ENCODE measurements at regions of chr20 and their contacts with region 1.

Region 1: DNA sequence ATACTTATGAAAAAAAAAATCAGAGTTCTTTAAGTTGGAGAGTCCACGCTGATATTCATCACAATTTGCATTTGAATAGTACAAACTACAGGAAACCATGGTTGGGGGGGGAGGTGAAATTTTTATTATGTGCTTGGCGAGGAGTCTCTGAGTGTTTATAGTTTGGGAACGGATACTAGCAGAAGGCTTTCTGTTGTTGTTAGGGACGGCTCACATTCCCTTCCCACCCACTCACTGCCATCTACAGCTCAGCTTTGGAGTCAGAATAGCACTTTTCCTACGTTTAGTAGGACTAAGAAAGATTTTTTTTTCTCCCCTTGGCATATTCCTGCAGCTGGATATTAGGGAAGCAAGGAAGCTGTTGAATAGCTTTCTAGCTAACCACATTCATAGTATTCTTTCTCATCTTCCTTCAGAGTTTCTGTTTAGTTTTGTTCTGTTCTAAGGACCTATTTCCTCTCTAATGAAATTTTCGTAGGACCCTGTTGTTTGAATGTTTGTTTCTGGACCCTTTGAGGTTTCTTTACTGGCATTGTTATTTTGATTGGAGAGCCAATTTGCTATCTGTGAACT is 235.1 kb upstream of the ZNF217 start:
- DNase-seq: peak; percentile 84
- H3K4me3 Mint-ChIP-seq: peak overlapping the region; percentile 66
- H3K27ac Mint-ChIP-seq: peak overlapping the region; percentile 98
- H3K4me1 Mint-ChIP-seq: peaks cover 37% of the 10 kb centered on the region
- H3K27me3 Mint-ChIP-seq: no peaks in the 10 kb centered on the region
- CTCF ChIP-seq: no peak

Region 2: GRCh38 chr20:53578492-53579222 is 250.1 kb before region 1 on chr20:
- CTCF ChIA-PET with region 1: interaction called, 5 read pairs
- POLR2A ChIA-PET with region 1: interaction called, 34 read pairs
- intact Hi-C with region 1: loop called (anchors 1 kb)
- DNase-seq: peak; percentile 91
- H3K4me3 Mint-ChIP-seq: peak overlapping the region; percentile 54
- H3K27ac Mint-ChIP-seq: peak overlapping the region; percentile 90
- H3K4me1 Mint-ChIP-seq: peaks cover 30% of the 10 kb centered on the region
- H3K27me3 Mint-ChIP-seq: no peaks in the 10 kb centered on the region
- CTCF ChIP-seq: peak; percentile 92

Region 3: DNA sequence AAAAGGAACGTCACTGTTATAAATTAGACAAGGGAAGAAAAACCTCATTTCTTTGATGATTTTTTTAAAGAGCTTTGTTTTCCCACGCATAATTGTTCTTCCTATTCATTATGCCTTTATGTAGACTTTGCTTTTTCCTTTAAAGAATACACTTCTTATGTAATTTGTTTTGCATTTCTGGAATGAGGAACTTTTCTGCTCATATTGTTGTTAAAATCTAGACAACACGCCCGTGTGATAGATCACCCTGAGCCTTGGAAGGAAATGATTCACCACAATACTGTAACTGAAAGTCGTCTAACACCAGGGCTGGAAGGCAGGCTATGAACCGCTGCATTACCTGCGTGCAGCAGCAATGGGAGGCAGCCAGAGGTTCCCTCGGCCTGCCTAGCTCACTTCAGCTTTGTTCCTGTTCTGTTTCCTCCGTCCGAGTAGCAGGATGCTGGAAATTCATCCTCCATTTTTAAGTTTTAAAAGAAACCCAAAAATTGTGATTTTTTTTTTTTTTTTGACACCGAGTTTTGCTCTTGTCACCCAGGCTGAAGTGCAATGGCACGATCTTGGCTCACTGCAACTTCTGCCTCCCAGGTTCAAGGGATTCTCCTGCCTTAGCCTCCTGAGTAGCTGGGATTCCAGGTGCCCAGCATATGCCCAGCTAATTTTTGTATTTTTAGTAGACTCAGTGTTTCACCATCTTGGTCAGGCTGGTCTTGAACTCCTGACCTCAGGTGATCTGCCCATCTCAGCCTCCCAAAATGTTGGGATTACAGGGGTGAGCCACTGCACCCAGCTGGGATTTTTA is 185.5 kb before region 1 on chr20:
- CTCF ChIA-PET with region 1: interaction called, 4 read pairs
- POLR2A ChIA-PET with region 1: interaction called, 12 read pairs
- intact Hi-C with region 1: loop called (anchors 2 kb)
- DNase-seq: peak; percentile 79
- H3K4me3 Mint-ChIP-seq: peak overlapping the region; percentile 51
- H3K27ac Mint-ChIP-seq: peak overlapping the region; percentile 97
- H3K4me1 Mint-ChIP-seq: peaks cover 12% of the 10 kb centered on the region
- H3K27me3 Mint-ChIP-seq: no peaks in the 10 kb centered on the region
- CTCF ChIP-seq: no peak

Region 4: GRCh38 chr20:53750827-53751619 is 77.7 kb before region 1 on chr20:
- CTCF ChIA-PET with region 1: interaction called, 4 read pairs
- POLR2A ChIA-PET with region 1: interaction called, 27 read pairs
- intact Hi-C with region 1: loop called (anchors 1 kb)
- DNase-seq: no peak
- H3K4me3 Mint-ChIP-seq: no peak overlapping the region
- H3K27ac Mint-ChIP-seq: peak overlapping the region; percentile 83
- H3K4me1 Mint-ChIP-seq: peaks cover 29% of the 10 kb centered on the region
- H3K27me3 Mint-ChIP-seq: no peaks in the 10 kb centered on the region
- CTCF ChIP-seq: no peak

Region 5: DNA sequence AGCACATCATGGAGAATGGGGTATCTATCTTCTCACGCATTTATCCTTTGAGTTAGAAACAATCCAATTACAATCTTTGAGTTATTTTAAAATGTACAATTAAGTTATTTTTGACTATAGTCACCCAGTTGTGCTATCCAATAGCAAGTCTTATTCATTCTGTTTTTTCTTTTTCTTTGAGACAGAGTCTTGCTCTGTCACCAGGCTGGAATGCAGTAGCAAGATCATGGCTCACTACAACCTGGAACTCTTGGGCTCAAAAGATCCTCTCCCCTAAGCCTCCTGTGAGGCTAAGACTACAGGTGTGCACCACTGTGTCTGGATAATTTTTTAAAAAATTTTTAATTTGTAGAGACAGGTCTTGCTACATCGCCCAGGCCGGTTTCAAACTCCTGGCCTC is 33.6 kb before region 1 on chr20:
- CTCF ChIA-PET with region 1: no interaction called
- POLR2A ChIA-PET with region 1: interaction called, 14 read pairs
- intact Hi-C with region 1: no loop called
- DNase-seq: no peak
- H3K4me3 Mint-ChIP-seq: no peak overlapping the region
- H3K27ac Mint-ChIP-seq: no peak overlapping the region
- H3K4me1 Mint-ChIP-seq: peaks cover 11% of the 10 kb centered on the region
- H3K27me3 Mint-ChIP-seq: no peaks in the 10 kb centered on the region
- CTCF ChIP-seq: no peak

Region 6: GRCh38 chr20:53857723-53858236 is 29.0 kb after region 1 on chr20:
- CTCF ChIA-PET with region 1: interaction called, 5 read pairs
- POLR2A ChIA-PET with region 1: interaction called, 19 read pairs
- intact Hi-C with region 1: no loop called
- DNase-seq: no peak
- H3K4me3 Mint-ChIP-seq: no peak overlapping the region
- H3K27ac Mint-ChIP-seq: no peak overlapping the region
- H3K4me1 Mint-ChIP-seq: no peaks in the 10 kb centered on the region
- H3K27me3 Mint-ChIP-seq: no peaks in the 10 kb centered on the region
- CTCF ChIP-seq: no peak

Region 7: DNA sequence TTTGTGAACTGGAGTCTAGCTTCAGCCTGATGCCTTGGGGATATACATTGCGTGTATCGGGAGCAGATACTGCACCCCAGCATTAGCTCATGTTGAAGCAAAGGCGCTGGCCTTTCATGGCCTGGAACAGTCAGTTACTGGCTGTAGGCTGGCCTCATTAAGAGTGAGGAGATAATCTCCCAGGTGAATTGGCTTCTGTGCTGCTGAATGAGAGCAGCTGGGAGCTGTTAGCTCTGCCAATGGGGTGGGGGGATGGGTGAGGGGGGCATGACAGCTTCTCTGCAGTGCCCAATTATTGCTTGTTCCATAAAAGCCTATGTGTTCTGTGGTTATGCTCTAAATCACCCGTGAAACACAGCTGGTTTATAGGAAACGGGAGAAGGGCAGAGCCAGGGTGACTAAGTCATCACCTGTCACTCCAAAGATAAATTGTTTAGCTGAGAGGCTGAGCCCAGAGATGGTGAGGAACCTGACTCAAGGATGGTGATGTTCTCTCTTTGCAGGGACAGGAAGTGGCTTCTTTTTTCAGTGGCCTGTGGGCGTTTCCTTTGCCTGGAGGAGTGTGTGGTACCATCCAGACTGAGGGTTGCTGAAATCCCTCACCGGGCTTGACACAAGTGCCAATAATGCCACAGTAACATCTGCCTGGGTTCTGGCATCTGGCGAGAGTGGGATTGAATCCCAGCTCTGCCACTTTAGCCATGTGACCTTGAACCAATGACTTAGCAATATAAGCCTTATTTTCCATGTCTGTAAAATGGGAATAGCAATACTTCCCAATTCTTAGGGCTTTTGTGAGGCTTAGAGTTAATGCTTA is 70.8 kb after region 1 on chr20:
- CTCF ChIA-PET with region 1: interaction called, 5 read pairs
- POLR2A ChIA-PET with region 1: interaction called, 28 read pairs
- intact Hi-C with region 1: no loop called
- DNase-seq: peak; percentile 89
- H3K4me3 Mint-ChIP-seq: peak overlapping the region; percentile 39
- H3K27ac Mint-ChIP-seq: peak overlapping the region; percentile 75
- H3K4me1 Mint-ChIP-seq: peaks cover 27% of the 10 kb centered on the region
- H3K27me3 Mint-ChIP-seq: no peaks in the 10 kb centered on the region
- CTCF ChIP-seq: no peak

Measured in MCF 10A (cell line).